ENCODE measurements at regions of chr12 and their contacts with region 1.

Region 1: DNA sequence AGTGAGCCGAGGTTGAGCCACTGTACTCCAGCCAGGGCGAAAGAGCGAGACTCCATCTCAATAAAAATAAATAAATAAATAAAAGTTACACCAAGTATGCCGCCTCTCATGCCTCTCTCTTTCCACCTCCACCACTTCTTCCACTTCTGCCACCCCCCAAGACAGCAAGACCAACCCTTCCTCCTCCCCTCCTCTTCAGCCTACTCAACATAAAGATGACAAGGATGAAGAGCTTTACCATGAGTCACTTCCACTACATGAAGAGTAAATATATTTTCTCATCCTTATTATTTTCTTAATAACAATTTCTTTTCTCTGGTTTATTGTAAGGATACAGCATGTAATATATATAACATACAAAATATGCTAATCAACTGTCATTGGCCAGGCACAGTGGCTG is 3.6 kb upstream of the TMED2 start:
- DNase-seq: no peak
- ATAC-seq: no peak
- H3K4me3 ChIP-seq: no peak overlapping the region
- H3K4me3 Mint-ChIP-seq: no peak overlapping the region
- H3K27ac ChIP-seq: no peak overlapping the region
- H3K27ac Mint-ChIP-seq: no peak overlapping the region
- H3K4me1 ChIP-seq: peaks cover 21 to 27% of the 10 kb centered on the region in 2 donors
- H3K4me1 Mint-ChIP-seq: peaks cover 23% of the 10 kb centered on the region
- H3K27me3 ChIP-seq: no peaks in the 10 kb centered on the region
- H3K27me3 Mint-ChIP-seq: no peaks in the 10 kb centered on the region
- CTCF ChIP-seq: no peak

Region 2: GRCh38 chr12:123388177-123388947 is 192.4 kb before region 1 on chr12:
- CTCF ChIA-PET with region 1: interaction called, 3 read pairs
- POLR2A ChIA-PET with region 1: no interaction called
- intact Hi-C with region 1: loop called (anchors 1 kb)
- DNase-seq: peak; percentile 85
- ATAC-seq: peak; percentile 62
- H3K4me3 ChIP-seq: peak overlapping the region; percentile 60 to 78 (median 63)
- H3K4me3 Mint-ChIP-seq: peak overlapping the region; percentile 91
- H3K27ac ChIP-seq: peak overlapping the region; percentile 74 to 80
- H3K27ac Mint-ChIP-seq: peak overlapping the region; percentile 93
- H3K4me1 ChIP-seq: peaks cover 22 to 36% of the 10 kb centered on the region in 2 donors
- H3K4me1 Mint-ChIP-seq: peaks cover 38% of the 10 kb centered on the region
- H3K27me3 ChIP-seq: no peaks in the 10 kb centered on the region
- H3K27me3 Mint-ChIP-seq: no peaks in the 10 kb centered on the region
- CTCF ChIP-seq: peak; percentile 9

Region 3: GRCh38 chr12:123533672-123534643 is 46.8 kb before region 1 on chr12 and contains the start of gene RILPL1:
- CTCF ChIA-PET with region 1: no interaction called
- POLR2A ChIA-PET with region 1: no interaction called
- intact Hi-C with region 1: loop called (anchors 5 kb)
- DNase-seq: peak; percentile 75
- ATAC-seq: peak; percentile 78
- H3K4me3 ChIP-seq: peak within 1 kb of the TSS; percentile 48 to 67 (median 53)
- H3K4me3 Mint-ChIP-seq: peak within 1 kb of the TSS; percentile 86
- H3K27ac ChIP-seq: no peak within 1 kb of the TSS
- H3K27ac Mint-ChIP-seq: peak within 1 kb of the TSS; percentile 56
- H3K4me1 ChIP-seq: peaks cover 21 to 23% of the 10 kb centered on the region in 2 donors
- H3K4me1 Mint-ChIP-seq: peaks cover 16% of the 10 kb centered on the region
- H3K27me3 ChIP-seq: peaks cover 0 to 7% (median under 1%) of the 10 kb centered on the region in 4 experiments
- H3K27me3 Mint-ChIP-seq: peaks cover 2% of the 10 kb centered on the region
- CTCF ChIP-seq: peak; percentile 53
- total RNA-seq, gene RILPL1: 2.6 and 2.8 TPM in 2 replicates

Region 4: GRCh38 chr12:123601602-123602489 is 21.1 kb after region 1 on chr12 and contains the start of gene DDX55:
- CTCF ChIA-PET with region 1: no interaction called
- POLR2A ChIA-PET with region 1: no interaction called
- intact Hi-C with region 1: loop called (anchors 1 kb)
- DNase-seq: peak; percentile 93
- ATAC-seq: peak; percentile 89
- H3K4me3 ChIP-seq: peak within 1 kb of the TSS; percentile 62 to 99 (median 93)
- H3K4me3 Mint-ChIP-seq: peak within 1 kb of the TSS; percentile 99
- H3K27ac ChIP-seq: peak within 1 kb of the TSS; percentile 74 to 85
- H3K27ac Mint-ChIP-seq: peak within 1 kb of the TSS; percentile 97
- H3K4me1 ChIP-seq: peaks cover 12 to 23% of the 10 kb centered on the region in 2 donors
- H3K4me1 Mint-ChIP-seq: peaks cover 23% of the 10 kb centered on the region
- H3K27me3 ChIP-seq: no peaks in the 10 kb centered on the region
- H3K27me3 Mint-ChIP-seq: no peaks in the 10 kb centered on the region
- CTCF ChIP-seq: peak; percentile 40
- total RNA-seq, gene DDX55: 33.3 and 35.6 TPM in 2 replicates

Region 5: DNA sequence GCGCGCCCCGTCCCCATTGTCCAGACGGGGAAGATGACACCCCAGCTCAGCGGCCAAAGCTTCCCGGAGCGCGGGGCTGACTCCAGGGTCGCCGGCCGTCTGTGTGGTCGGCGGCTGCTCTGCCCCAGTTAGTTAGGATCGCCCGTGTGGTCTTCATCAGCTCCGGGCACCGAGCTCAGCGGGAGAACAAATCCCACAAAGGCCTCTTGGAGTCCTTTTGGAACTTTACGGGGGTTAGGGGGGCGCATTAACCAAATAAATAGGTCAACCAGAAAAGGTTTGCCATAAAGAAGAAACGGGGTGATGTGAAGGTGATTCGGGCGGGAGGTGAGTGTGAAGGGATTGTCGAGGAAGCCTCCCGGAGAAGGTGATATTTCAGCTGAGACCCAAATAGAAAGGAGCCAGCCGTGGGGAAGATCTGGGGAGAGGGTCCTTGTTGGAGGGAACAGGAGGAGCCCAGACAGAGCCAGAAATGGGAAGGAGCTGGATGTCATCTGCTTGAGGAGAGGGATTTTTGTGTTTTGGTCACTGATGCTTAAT is 132.1 kb after region 1 on chr12:
- CTCF ChIA-PET with region 1: no interaction called
- POLR2A ChIA-PET with region 1: no interaction called
- intact Hi-C with region 1: no loop called
- DNase-seq: no peak
- ATAC-seq: no peak
- H3K4me3 ChIP-seq: peak overlapping the region; percentile 60 to 83 (median 77)
- H3K4me3 Mint-ChIP-seq: peak overlapping the region; percentile 86
- H3K27ac ChIP-seq: peak overlapping the region in 1 of 2 donors; percentile 58
- H3K27ac Mint-ChIP-seq: peak overlapping the region; percentile 88
- H3K4me1 ChIP-seq: peaks cover 23 to 24% of the 10 kb centered on the region in 2 donors
- H3K4me1 Mint-ChIP-seq: peaks cover 35% of the 10 kb centered on the region
- H3K27me3 ChIP-seq: no peaks in the 10 kb centered on the region
- H3K27me3 Mint-ChIP-seq: no peaks in the 10 kb centered on the region
- CTCF ChIP-seq: no peak

Region 6: GRCh38 chr12:123761841-123762714 is 181.3 kb after region 1 on chr12 and contains the start of gene DNAH10:
- CTCF ChIA-PET with region 1: no interaction called
- POLR2A ChIA-PET with region 1: no interaction called
- intact Hi-C with region 1: loop called (anchors 5 kb)
- DNase-seq: peak; percentile 72
- ATAC-seq: peak; percentile 79
- H3K4me3 ChIP-seq: peak within 1 kb of the TSS; percentile 26 to 73 (median 63)
- H3K4me3 Mint-ChIP-seq: peak within 1 kb of the TSS; percentile 94
- H3K27ac ChIP-seq: no peak within 1 kb of the TSS
- H3K27ac Mint-ChIP-seq: peak within 1 kb of the TSS; percentile 81
- H3K4me1 ChIP-seq: peaks cover 9 to 12% of the 10 kb centered on the region in 2 donors
- H3K4me1 Mint-ChIP-seq: peaks cover 9% of the 10 kb centered on the region
- H3K27me3 ChIP-seq: no peaks in the 10 kb centered on the region
- H3K27me3 Mint-ChIP-seq: no peaks in the 10 kb centered on the region
- CTCF ChIP-seq: peak; percentile 66
- total RNA-seq, gene DNAH10: 0.66 and 0.99 TPM in 2 replicates

Measured in B cell (primary cell).